ENCODE measurements at regions of chr3 and their contacts with region 1.

Region 1: GRCh38 chr3:51777985-51778384 is 1.1 kb downstream of the IQCF6 start:
- DNase-seq: no peak
- H3K4me3 ChIP-seq: no peak overlapping the region
- H3K27ac ChIP-seq: no peak overlapping the region
- H3K4me1 ChIP-seq: no peaks in the 10 kb centered on the region
- H3K27me3 ChIP-seq: no peaks in the 10 kb centered on the region
- CTCF ChIP-seq: no peak

Region 2: DNA sequence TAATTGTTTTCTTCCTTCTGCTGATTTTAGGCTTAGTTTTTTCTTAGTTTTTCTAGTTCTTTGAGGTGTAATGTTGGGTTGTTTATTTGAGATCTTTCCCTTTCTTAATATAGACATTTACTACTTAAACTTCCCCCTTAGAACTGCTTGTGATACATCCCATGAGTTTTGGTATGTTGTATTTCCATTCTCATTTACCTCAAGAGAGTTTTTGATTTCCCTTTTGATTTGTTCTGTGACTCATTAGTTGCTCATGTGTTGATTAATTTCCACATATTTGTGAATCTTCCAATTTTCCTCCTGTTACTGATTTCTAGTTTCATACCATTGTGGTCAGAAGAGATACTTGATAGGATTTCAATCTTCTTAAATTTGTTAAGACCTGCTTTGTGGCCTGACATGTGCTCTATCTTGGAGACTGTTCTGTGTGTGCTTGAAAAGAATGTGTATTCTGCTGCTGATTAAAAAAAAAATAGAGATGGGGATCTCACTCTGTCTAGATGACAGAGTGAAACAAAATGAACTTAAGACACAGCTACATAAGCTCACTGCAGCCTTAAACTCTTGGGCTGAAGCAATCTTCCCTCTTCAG is 48.8 kb before region 1 on chr3:
- dilution Hi-C with region 1: loop called (anchors 5 kb)
- DNase-seq: peak; percentile 54
- H3K4me3 ChIP-seq: no peak overlapping the region
- H3K27ac ChIP-seq: no peak overlapping the region
- H3K4me1 ChIP-seq: peaks cover 23% of the 10 kb centered on the region
- H3K27me3 ChIP-seq: no peaks in the 10 kb centered on the region
- CTCF ChIP-seq: no peak

Measured in keratinocyte (primary cell).